ENCODE measurements at regions of chr2 and their contacts with region 1.

Region 1: GRCh38 chr2:120934574-120935340 is 199.1 kb downstream of the GLI2 start:
- DNase-seq: peak; percentile 74 to 82
- H3K4me3 ChIP-seq: no peak overlapping the region
- H3K27ac ChIP-seq: no peak overlapping the region
- H3K4me1 ChIP-seq: peaks cover 25% of the 10 kb centered on the region
- H3K27me3 ChIP-seq: no peaks in the 10 kb centered on the region
- CTCF ChIP-seq: no peak

Region 2: DNA sequence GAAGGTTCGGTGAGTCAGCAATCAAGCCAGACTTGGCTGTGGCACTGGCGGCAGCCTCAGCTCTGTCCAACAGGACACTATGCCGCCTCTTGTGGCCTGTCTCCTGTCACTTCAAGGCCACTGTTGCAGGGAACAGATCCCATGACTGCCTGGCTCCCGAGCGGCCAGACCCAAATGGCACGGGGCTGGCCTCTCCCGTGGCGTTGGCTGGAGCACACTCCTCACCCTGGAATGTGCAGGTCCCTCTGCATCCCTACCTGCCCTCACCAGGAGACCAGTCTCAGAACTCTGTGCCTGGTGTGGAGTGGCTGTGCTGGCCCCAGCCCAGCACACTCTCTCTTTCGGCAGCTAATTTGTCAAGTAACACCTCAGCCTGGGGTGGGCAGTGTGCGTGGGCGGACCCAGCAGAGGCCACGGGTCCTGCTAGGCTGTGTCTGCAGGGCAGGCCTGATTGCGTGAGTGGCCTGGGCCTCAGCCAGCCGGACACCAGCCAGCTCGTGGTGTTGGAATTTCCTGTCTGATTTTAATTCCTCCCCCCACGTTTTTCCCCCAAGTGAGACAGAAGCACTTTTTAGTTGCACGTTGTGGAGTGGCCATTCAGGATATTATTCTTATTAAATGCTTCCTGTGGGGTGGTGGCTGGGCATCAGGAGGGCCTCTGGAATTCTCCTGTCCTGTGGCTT is 19.8 kb before region 1 on chr2:
- CTCF ChIA-PET with region 1: no interaction called
- POLR2A ChIA-PET with region 1: interaction called, 9 read pairs
- intact Hi-C with region 1: loop called (anchors 1 kb)
- DNase-seq: peak; percentile 46 to 87
- H3K4me3 ChIP-seq: no peak overlapping the region
- H3K27ac ChIP-seq: no peak overlapping the region
- H3K4me1 ChIP-seq: peaks cover 21% of the 10 kb centered on the region
- H3K27me3 ChIP-seq: no peaks in the 10 kb centered on the region
- CTCF ChIP-seq: no peak

Region 3: DNA sequence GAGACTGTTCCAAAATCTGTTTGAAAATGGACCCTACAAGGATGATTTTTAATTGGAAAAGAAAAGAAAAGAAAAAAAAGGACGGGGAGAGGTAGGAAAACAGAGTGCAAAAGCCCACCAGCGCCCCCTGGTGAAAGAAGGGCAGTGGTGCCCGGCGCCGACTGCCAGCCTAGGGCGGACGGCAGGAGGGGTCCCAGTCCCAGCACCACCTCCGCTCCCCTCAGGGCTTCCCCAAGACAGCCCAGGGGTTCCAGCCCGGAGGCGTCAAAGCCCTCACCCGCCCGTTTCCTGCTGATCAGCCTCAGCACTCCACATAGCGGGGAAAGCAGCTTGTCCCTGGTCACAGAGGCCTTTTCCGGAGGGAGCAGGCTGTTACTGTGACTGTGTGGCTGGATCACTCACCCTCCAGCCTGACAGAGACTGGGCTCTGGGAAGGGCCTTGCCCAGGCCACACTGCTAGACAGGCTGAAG is 136.3 kb after region 1 on chr2:
- CTCF ChIA-PET with region 1: interaction called, 4 read pairs
- POLR2A ChIA-PET with region 1: no interaction called
- intact Hi-C with region 1: loop called (anchors 5 kb)
- DNase-seq: peak in 1 of 2 experiments; percentile 84
- H3K4me3 ChIP-seq: no peak overlapping the region
- H3K27ac ChIP-seq: no peak overlapping the region
- H3K4me1 ChIP-seq: peaks cover 14% of the 10 kb centered on the region; the same call in 1 of the 2 replicates
- H3K27me3 ChIP-seq: peaks cover 17% of the 10 kb centered on the region
- CTCF ChIP-seq: peak; percentile 98

Measured in PC-9 (cell line).